Activated CD4-positive, alpha-beta memory T cell treated with anti-CD3 and anti-CD28 coated beads for 36 hours (primary cell): ENCODE measurements at regions of chr5 and their contacts with region 1.

Region 1: GRCh38 chr5:77935506-77936364 is 159.6 kb upstream of the TBCA start:
- DNase-seq: peak; percentile 57
- H3K4me3 Mint-ChIP-seq: peak overlapping the region; percentile 17
- H3K27ac Mint-ChIP-seq: peak overlapping the region; percentile 16
- H3K4me1 Mint-ChIP-seq: peaks cover 20% of the 10 kb centered on the region
- H3K27me3 Mint-ChIP-seq: peaks cover 14% of the 10 kb centered on the region

Region 2: DNA sequence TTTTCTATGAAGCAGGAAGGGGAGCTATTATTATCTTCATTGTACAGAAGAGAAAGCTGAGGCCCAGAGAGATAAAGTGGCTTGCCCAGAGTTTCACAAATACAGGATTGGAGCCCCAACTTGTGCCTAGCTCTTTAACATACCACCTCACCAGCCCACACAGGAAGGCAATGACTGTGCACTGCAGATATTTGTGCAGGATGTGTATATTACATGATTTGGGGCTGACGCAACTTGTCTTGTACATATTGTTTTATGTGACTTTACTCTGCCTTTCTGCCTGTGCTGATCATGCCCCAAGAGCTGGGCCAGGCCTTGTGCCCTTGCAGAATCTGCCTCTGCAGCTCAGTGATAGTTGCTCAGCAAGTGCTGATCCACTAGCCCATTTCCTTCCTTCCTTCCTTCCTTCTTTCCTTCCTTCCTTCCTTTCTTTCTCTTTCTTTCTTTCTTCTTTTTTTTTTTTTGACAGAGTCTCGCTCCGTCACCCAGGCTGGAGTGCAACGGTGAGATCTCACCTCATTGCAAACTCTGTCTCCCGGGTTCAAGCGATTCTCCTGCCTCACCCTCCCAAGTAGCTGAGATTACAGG is 53.0 kb before region 1 on chr5:
- CTCF ChIA-PET with region 1: no interaction called
- POLR2A ChIA-PET with region 1: no interaction called
- intact Hi-C with region 1: loop called (anchors 1 kb)
- DNase-seq: peak; percentile 74
- H3K4me3 Mint-ChIP-seq: no peak overlapping the region
- H3K27ac Mint-ChIP-seq: peak overlapping the region; percentile 85
- H3K4me1 Mint-ChIP-seq: peaks cover 30% of the 10 kb centered on the region
- H3K27me3 Mint-ChIP-seq: peaks cover 15% of the 10 kb centered on the region

Region 3: GRCh38 chr5:78677777-78678668 is 742.3 kb after region 1 on chr5:
- CTCF ChIA-PET with region 1: no interaction called
- POLR2A ChIA-PET with region 1: no interaction called
- intact Hi-C with region 1: no loop called
- DNase-seq: no peak
- H3K4me3 Mint-ChIP-seq: no peak overlapping the region
- H3K27ac Mint-ChIP-seq: no peak overlapping the region
- H3K4me1 Mint-ChIP-seq: no peaks in the 10 kb centered on the region
- H3K27me3 Mint-ChIP-seq: peaks cover 10% of the 10 kb centered on the region